ENCODE measurements at regions of chr10 and their contacts with region 1.

Region 1: DNA sequence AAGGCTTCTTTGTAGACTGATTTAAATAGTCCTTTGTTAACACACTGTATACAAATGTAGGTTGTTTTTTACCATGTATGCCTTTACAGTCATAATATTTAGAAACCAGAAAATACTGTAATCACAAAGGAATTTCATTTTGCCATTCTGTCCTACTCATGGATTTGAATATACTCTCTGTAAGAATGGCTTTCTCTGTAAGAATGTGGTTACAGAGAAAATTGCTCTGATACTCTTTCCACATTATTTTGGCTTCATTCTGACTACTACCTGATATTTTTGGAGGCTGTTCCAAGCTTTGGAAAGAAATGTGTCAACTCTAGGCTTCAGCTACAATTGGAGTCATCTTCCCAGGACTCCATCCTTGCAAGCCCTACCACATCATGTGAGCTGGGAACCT is 23.5 kb downstream of the CH25H start:
- DNase-seq: no peak
- H3K4me3 Mint-ChIP-seq: no peak overlapping the region
- H3K27ac Mint-ChIP-seq: no peak overlapping the region
- H3K4me1 Mint-ChIP-seq: no peaks in the 10 kb centered on the region
- H3K27me3 Mint-ChIP-seq: no peaks in the 10 kb centered on the region
- CTCF ChIP-seq: no peak

Region 2: DNA sequence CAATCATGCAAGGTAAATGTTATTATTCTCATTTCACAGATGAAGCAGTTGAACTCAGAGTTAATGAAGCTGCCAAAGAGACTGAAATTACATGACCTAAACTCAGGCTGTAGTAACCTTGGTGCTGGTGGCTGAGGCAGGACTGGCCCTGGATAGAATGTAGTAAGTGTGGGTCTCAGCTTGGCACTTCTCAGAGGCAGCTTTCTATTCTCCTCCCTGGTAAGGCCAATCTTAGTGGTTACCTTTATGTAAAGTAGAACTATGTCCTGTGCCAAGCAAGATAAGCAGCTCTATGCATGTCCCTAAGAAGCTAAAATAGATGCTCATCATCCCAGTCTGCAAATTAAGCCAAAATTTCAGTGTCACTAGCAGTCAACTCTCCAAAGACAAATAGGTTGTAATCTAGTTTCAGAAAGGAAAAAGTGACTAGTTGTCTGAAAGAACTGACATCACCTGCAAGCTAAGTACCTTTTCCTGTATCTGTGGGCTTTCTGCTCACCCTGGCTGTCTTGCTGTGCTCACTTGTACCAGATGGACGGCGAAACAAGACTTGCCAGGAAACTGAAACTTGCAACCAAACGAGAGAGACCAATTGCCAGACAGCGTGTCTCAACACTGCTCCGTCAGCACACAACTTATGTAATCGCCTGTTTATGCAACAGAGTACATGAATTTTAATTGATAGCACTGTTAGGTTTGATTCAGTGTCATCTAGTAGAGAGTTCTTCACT is 20.1 kb before region 1 on chr10:
- CTCF ChIA-PET with region 1: no interaction called
- POLR2A ChIA-PET with region 1: interaction called, 11 read pairs
- intact Hi-C with region 1: no loop called
- DNase-seq: peak; percentile 84
- H3K4me3 Mint-ChIP-seq: peak overlapping the region; percentile 29
- H3K27ac Mint-ChIP-seq: no peak overlapping the region
- H3K4me1 Mint-ChIP-seq: peaks cover 30% of the 10 kb centered on the region
- H3K27me3 Mint-ChIP-seq: no peaks in the 10 kb centered on the region
- CTCF ChIP-seq: no peak